BJ (cell line): ENCODE measurements at regions of chr18 and their contacts with region 1.

Region 1: DNA sequence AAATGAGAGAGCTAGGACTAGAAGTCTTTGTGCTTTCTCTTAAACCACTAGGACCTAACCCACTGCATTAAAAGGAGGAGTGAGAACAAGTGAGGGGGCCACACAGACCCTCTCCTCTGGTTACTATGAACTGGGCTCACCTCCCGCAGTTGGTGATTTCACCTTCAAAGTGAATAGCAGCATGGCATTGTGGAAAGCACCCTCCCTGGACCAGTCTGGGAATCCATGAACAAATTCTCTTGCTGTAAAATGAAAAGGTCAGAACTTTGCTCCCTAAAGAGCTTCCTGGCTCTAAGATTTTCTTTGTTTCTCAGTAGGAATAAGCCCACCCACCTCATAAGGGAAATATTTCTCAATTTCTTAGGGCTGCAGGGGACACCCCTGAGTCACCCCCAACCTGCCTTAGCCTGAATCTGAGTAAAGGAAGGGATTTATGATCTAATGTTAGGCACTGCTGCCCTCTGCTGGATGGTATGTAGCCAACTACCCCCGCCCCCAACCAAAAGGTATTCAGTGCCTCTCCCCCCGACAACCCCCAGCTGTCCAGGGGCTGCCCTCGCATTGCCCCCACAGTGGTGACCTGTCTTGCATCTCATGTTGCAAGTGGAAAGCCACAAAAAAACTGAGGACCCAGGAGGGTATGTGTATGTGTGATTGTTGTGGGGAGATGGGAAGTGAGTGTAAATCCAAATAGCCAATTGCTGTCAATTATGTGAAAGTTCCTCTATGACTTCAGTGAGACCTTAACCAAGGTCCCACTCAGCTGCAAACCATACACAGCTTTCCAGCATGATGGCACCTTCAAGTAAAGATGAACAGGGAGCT is 230.9 kb upstream of the SLC14A2 start:
- DNase-seq: no peak
- H3K4me3 ChIP-seq: no peak overlapping the region
- H3K27me3 ChIP-seq: no peaks in the 10 kb centered on the region; the same call in 1 of the 2 replicates
- CTCF ChIP-seq: peak; percentile 71

Region 2: GRCh38 chr18:45046228-45046627 is 338.1 kb before region 1 on chr18:
- CTCF ChIA-PET with region 1: no interaction called
- POLR2A ChIA-PET with region 1: no interaction called
- DNase-seq: no peak
- H3K4me3 ChIP-seq: no peak overlapping the region
- H3K27me3 ChIP-seq: no peaks in the 10 kb centered on the region
- CTCF ChIP-seq: no peak

Region 3: DNA sequence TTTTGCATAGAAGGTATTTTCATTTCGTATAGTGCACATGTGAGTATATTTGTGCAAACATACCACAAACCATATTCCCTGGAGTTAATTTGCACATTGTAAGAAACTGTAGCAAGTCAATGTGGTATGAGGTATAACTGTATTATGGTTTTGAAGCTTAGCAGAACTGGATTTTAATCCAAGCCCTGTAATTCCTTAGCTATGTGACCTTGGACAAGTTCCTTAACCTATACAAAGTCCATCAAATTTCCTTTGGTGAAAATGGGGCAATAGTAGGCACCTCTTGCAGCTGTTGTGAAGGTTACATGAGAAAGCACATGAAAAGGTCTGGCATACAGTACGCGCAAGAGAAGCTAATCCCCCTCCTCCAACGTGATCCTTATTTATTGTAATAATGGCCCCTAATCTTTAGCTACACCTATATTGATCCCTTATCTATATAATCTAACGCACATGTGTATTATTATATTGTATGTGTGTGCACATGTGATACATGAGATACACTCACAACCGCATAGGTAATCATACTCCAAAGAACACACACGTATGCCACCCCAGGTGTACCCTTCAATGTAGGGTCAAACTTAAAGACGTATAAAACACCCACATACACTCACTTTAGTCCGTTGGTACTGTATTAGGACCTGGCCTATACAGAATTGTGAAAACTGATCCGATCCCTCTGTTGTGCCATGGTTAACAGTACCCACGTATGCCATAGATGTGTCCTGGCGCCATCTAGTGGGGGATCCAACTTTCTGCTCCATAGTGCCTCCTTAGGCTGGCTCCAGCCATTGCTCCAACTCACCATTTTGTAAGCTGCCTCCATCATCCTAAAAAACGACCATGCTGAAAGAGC is 171.9 kb before region 1 on chr18:
- CTCF ChIA-PET with region 1: interaction called, 10 read pairs
- POLR2A ChIA-PET with region 1: no interaction called
- DNase-seq: no peak
- H3K4me3 ChIP-seq: no peak overlapping the region
- H3K27me3 ChIP-seq: no peaks in the 10 kb centered on the region
- CTCF ChIP-seq: peak; percentile 99

Region 4: DNA sequence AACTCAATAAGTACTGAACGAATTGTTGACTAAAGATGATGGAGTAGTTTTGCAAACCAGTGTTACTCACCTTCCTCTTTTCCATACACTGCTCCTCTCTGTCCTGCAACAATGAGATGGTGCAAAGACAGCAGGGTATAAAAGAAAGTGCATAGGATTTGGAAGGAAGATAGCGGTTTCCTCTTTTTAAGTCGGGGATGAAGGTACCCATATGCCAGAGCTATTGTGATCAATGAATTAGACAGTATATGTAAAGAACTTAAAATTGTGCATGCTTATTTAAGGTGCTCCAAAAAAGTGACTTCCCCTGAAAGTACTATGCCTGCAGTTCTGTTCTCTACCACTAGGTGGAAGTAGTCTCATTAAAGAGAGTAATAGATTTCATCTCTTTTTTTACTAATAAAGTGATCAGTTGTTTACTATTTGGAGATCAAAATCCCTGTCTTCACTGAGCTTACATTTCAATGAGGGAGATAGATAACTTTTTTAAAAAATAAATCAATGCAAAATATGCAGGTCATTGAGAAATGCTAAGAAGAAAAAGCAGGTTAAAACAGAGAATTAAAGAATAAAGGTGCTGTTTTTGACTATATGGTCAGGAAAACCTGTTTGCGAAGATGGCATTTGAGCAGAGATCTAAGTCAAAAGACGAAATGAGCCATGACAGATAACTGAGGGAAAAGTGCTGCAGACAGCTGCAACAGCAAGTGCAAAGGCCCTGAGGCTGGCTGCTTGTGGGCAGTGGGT is 108.8 kb before region 1 on chr18:
- CTCF ChIA-PET with region 1: interaction called, 34 read pairs
- POLR2A ChIA-PET with region 1: no interaction called
- DNase-seq: no peak
- H3K4me3 ChIP-seq: no peak overlapping the region
- H3K27me3 ChIP-seq: no peaks in the 10 kb centered on the region
- CTCF ChIP-seq: peak; percentile 73

Region 5: GRCh38 chr18:45370255-45371010 is 13.9 kb before region 1 on chr18:
- CTCF ChIA-PET with region 1: interaction called, 21 read pairs
- POLR2A ChIA-PET with region 1: no interaction called
- DNase-seq: no peak
- H3K4me3 ChIP-seq: no peak overlapping the region
- H3K27me3 ChIP-seq: no peaks in the 10 kb centered on the region; the same call in 1 of the 2 replicates
- CTCF ChIP-seq: no peak

Region 6: DNA sequence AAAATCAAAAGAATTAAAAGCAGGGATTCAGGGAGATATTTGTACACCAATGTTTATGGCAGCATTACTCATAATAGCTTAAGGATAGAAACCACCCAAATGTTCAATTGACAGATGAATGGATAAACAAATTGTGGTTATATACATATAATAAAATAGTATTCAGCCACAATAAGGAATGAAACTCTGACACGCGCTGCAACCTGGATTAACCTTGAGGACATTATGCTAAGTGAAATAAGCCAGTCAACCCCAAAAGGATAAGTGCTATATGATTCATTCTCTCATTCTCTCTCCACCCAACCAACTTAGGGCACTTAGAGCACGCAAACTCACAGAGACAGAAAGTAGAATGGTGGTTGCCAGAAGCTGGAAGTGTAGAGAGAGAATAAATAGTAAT is 14.1 kb after region 1 on chr18:
- CTCF ChIA-PET with region 1: interaction called, 13 read pairs
- POLR2A ChIA-PET with region 1: no interaction called
- DNase-seq: no peak
- H3K4me3 ChIP-seq: no peak overlapping the region
- H3K27me3 ChIP-seq: no peaks in the 10 kb centered on the region
- CTCF ChIP-seq: no peak

Region 7: DNA sequence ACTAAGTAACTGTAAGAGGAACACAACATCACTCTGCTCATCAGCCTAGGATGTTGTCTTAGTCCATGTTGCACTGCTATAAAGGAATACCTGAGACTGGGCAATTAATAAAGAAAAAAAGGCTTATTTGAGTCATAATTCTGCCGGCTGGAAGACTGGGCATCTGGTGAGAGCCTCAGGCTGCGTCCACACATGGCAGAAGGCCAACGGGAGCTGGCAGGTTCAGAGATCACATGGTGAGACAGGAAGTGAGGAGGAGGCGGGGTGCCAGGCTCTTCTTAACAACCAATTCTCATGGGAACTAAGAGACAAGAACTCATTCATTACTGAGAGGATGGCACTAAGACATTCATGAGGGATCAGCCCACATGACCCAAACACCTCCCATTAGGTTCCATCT is 536.0 kb after region 1 on chr18:
- CTCF ChIA-PET with region 1: no interaction called
- POLR2A ChIA-PET with region 1: no interaction called
- DNase-seq: peak; percentile 41
- H3K4me3 ChIP-seq: no peak overlapping the region
- H3K27me3 ChIP-seq: no peaks in the 10 kb centered on the region
- CTCF ChIP-seq: no peak